Posterior cingulate gyrus (tissue), 11 donors: ENCODE measurements at regions of chr17 and their contacts with region 1.

Region 1: DNA sequence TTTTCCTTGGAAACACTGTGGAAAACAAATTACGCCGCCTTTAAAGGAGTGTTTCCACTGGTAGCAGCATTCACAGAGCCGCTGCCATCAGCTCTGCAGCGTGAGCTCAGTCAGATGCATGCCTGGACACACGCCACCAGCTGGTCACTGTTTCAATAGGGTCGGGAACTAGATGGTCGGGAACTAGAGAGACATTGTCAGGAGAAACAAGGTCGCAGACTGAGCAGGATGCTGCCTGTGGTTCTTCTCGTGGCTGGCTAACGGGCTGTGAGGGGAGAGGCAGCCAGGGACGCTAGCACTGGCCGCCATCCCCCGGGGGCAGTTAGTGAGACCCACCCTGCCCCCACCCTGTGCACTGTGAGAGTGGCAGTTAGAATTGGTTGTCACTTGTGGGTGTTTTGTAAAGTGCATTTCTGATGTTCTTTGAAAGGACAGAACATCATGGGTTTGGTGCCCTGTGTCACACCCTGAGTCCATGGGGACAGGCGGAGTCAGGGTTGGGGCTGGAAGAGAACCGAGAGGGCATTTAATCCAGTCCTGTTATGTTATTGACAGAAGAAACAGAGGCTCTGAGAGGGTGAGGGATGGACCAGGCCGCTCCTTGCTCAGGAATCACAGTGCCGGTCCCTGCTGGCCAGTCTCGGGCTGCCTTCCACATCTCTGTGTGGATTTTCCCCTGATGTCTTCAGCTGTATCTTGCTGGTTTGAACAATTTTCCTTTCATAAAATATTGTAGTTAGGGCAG is 86.3 kb downstream of the SPECC1 start:
- DNase-seq: peak; percentile 69 to 96 (median 84)

Region 2: DNA sequence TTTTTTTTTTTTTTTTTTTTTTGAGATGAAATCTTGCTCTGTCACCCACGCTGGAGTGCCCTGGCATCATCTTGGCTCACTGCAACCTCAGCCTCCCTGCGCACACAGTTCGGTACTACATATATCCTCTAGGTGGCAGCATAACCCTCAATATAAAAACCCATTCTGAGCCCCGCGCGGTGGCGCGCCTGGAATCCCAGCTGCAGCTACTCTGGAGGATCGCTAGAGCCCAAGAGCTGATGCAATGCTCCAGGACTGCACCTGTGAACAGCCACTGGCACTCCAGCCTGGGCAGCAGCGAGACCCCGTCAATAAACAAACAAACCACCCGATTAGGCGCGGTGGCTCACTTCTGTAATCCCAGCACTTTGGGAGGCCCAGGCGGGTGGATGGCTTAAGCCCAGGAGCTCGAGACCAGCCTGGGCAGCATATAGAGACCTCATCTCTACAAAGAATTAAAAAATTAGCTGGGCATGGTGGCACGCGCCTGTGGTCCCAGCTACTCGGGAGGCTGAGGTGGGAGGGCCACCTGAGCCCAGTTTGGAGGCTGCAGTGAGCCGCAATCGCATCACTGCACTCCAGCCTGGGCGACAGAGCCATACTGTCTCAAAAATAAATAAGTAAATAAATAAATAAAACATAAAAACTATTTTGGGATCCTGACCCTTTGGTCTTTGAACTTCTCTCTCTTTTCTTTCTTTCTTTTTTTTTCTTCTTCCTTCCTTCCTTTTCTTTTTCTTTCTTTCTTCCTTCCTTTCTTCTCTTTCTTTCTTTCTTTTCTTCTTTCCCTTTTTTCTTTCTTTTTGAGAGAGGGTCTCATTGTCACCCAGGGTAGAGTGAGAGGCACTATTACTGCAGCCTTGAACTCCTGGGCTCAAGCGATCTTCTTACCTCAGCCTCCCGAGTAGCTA is 102.5 kb before region 1 on chr17:
- intact Hi-C with region 1: loop called (anchors 5 kb)
- DNase-seq: peak; percentile 78 to 99 (median 89)

Region 3: DNA sequence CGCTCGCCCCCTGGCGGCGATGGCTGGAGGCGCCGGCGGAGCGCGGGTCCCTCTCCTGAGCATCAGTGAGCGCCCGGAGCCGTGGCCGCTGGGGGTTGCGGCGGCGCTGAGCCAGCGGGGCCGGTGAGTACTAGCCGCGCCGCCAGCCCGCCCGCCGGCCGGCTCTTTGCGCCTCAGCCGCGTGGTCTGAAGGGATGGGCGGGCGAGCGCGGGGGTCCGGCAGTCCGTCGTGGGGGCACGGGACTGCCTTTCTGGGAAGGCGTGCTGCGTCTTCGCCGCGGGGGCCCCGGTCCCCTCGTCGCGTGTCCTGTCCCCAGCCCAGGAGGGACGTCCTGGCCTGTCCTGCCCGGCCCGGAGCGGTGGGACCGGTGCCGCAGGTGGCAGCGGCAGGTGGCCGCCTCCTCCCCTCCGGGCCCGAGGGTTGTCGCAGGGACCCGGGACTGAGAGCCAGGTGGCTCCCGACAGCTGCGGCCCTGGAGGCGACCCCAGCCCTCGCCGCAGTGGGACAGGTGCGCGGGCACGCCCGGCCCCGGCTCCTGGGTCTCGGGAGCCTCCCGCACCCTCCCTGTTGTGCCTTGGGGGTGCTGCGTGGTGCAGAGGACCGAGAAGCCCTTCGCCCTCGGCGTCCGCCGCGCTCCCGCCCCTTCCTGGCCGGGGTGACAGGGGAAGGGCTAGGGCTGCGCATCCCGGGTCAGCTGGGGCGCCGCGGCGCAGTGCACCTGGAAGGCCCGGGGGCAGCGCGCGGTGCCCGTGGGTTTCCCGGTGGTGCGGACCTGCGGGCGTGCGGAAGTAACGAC is 86.0 kb before region 1 on chr17 and contains the start of gene SPECC1:
- intact Hi-C with region 1: loop called (anchors 5 kb)
- DNase-seq: peak; percentile 22 to 98 (median 84)